Mucosa of descending colon (tissue), 3 donors: ENCODE measurements at regions of chr7 and their contacts with region 1.

Region 1: DNA sequence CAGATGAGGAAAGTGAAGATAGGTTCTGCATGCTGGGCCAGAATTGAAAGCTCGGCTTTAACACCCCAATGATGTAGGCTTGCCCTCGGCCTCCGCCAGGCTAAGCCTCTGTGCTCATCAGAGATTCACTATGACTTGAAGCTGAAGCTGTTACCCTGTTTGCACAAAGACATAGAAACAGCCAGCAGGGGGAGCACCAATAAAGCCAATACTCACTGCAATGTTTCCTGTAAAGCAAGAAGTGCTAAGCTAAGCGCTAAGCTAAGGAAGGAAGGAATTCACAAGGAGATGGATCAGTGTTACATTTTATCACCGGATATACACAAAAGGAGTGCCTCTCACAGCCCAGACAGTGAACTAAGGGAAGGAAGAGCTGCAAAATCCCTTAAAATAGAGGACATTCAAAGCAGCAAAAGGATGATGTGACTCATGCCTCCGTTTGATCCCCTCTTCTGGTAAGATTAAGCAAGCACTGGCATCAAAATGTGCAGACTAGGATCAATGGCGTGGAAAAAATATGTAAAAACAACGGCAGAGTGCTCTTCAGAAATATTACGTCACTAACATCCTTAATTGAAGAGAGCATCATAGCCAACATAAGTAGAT is 153.8 kb downstream of the COBL start:
- DNase-seq: peak in 2 of 3 donors; percentile 41 to 96
- ATAC-seq: peak; percentile 96
- H3K4me3 ChIP-seq: no peak overlapping the region
- H3K4me1 ChIP-seq: no peaks in the 10 kb centered on the region
- CTCF ChIP-seq: peak; percentile 36

Region 2: GRCh38 chr7:50467817-50468610 is 694.8 kb before region 1 on chr7:
- intact Hi-C with region 1: loop called in 1 of 2 experiments (anchors 5 kb)
- DNase-seq: peak; percentile 76 to 87 (median 86)
- ATAC-seq: peak; percentile 95
- H3K4me3 ChIP-seq: no peak overlapping the region
- H3K4me1 ChIP-seq: peaks cover 4% of the 10 kb centered on the region
- CTCF ChIP-seq: peak; percentile 85

Region 3: GRCh38 chr7:51366930-51367613 is 204.2 kb after region 1 on chr7:
- intact Hi-C with region 1: loop called (anchors 2 to 10 kb)
- DNase-seq: peak in 1 of 3 donors; percentile 51
- ATAC-seq: peak; percentile 93
- H3K4me3 ChIP-seq: no peak overlapping the region
- H3K4me1 ChIP-seq: no peaks in the 10 kb centered on the region
- CTCF ChIP-seq: peak; percentile 54

Region 4: DNA sequence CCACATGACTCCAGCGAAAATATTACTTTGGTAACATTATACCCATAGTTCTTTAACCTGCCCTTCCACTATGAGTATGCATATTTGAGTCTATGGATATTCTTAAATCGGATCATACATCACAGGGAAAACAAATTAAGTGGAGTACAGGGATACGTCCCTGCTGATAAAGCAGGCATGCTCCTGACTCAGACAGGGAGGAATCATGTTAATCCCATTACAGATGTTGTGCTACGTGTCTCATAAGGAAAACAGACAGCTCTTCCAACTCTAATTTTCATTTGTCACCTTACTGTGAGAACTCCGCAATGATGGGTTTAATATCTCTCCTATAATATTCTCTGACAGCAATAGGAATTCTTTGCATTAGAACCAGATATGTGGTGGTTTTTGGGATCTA is 1403.1 kb after region 1 on chr7:
- intact Hi-C with region 1: no loop called
- DNase-seq: no peak
- ATAC-seq: no peak
- H3K4me3 ChIP-seq: no peak overlapping the region
- H3K4me1 ChIP-seq: no peaks in the 10 kb centered on the region
- CTCF ChIP-seq: no peak